Sigmoid colon (tissue), 7 donors: ENCODE measurements at regions of chr22 and their contacts with region 1.

Region 1: DNA sequence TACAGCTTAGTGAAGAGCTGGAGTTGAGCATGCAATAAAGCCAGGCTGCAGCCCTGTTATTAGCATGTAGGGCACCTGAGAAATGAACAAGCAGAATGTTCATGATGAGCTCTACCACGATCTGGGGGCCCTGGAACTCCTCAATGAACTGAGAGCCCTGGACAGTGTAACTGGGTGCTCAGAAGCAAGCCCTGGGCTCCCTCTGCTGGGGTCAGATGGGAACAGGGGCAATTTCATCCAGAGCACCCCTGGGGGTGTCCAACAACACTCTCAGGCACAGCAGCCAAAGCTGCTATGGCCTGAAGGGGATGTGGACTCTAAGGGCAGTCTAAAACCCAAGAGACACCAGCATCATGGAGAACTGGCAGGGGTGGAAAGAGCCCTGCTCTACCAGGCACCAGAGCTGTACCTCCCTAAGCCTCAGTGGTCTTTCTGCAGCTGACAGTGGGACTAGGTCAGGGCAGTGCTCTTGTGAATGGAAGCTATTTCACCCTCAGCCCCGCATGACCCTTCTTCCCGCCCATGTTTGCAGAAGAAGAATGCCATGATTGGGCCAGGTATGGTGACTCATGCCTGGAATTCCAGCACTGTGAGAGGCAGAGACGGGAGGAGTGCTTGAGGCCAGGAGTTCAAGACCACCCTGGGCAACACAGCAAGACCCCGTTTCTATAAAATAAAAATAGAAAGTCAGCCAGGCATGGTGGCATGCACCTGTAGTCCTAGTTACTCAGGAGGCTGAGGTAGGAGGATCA is 28.9 kb downstream of the THOC5 start:
- DNase-seq: no peak
- H3K4me3 ChIP-seq: no peak overlapping the region
- H3K27ac ChIP-seq: no peak overlapping the region
- H3K4me1 ChIP-seq: no peaks in the 10 kb centered on the region
- H3K27me3 ChIP-seq: no peaks in the 10 kb centered on the region
- CTCF ChIP-seq: peak in 3 of 4 experiments; percentile 27 to 53 (median 52)
- EP300 ChIP-seq: no peak
- POLR2A ChIP-seq: no peak

Region 2: DNA sequence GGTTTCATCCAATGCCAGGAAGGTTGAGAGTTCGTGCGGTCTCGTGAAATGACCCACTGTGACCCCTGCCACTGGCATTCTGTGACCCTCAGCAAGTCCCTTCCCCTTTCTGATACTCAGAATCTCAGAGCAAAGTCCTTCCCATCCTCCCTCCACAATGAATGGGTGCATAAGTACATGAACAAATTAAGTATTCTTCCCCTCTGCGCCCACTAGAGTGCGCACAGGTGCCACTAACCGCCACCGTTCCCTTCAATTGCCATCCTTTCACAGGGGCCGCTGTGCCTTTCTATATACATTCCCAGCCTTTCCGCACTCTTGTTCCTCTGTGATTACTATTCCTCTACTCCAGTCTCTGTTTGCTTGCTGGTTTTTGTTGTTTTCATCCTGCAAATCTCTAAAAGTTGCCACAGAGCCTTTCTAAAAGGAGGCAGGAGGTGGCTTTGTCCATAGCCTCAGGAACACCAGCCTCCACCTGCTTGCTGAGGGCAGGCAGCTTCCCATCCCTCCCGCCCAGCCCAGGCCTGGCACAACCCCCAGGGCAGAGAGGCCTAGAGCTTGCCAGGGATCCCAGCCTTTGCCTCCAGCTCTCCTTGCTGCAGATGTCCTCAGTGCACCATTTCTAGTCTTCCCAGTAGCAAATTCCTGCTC is 129.6 kb before region 1 on chr22:
- intact Hi-C with region 1: loop called (anchors 1 kb)
- DNase-seq: peak; percentile 82
- H3K4me3 ChIP-seq: no peak overlapping the region
- H3K27ac ChIP-seq: peak overlapping the region in 3 of 4 donors; percentile 3 to 41 (median 27)
- H3K4me1 ChIP-seq: peaks cover 0 to 18% (median 16%) of the 10 kb centered on the region in 4 donors
- H3K27me3 ChIP-seq: no peaks in the 10 kb centered on the region
- CTCF ChIP-seq: peak; percentile 64 to 85 (median 74)
- EP300 ChIP-seq: no peak
- POLR2A ChIP-seq: no peak